Panc1 (cell line): ENCODE measurements at regions of chr2 and their contacts with region 1.

Region 1: GRCh38 chr2:162537651-162538050 is 193.7 kb downstream of the GCA start:
- DNase-seq: no peak
- ATAC-seq: no peak
- H3K4me3 ChIP-seq: no peak overlapping the region
- H3K27ac ChIP-seq: no peak overlapping the region
- H3K4me1 ChIP-seq: no peaks in the 10 kb centered on the region
- H3K27me3 ChIP-seq: no peaks in the 10 kb centered on the region
- CTCF ChIP-seq: no peak

Region 2: GRCh38 chr2:162060522-162060921 is 477.1 kb before region 1 on chr2:
- CTCF ChIA-PET with region 1: no interaction called
- POLR2A ChIA-PET with region 1: interaction called, 10 read pairs
- in situ Hi-C with region 1: no loop called
- intact Hi-C with region 1: no loop called
- DNase-seq: no peak
- ATAC-seq: no peak
- H3K4me3 ChIP-seq: no peak overlapping the region
- H3K27ac ChIP-seq: no peak overlapping the region
- H3K4me1 ChIP-seq: no peaks in the 10 kb centered on the region
- H3K27me3 ChIP-seq: no peaks in the 10 kb centered on the region
- CTCF ChIP-seq: no peak